ENCODE measurements at regions of chr12 and their contacts with region 1.

Region 1: GRCh38 chr12:99302874-99303273 is 344.7 kb upstream of the GARIN6 start:
- DNase-seq: no peak
- ATAC-seq: no peak
- H3K4me3 ChIP-seq: no peak overlapping the region
- H3K27ac ChIP-seq: no peak overlapping the region
- H3K4me1 ChIP-seq: no peaks in the 10 kb centered on the region
- H3K27me3 ChIP-seq: peaks cover 7% of the 10 kb centered on the region; the same call in 1 of the 2 replicates
- CTCF ChIP-seq: no peak

Region 2: GRCh38 chr12:98955277-98955676 is 347.6 kb before region 1 on chr12:
- CTCF ChIA-PET with region 1: no interaction called
- POLR2A ChIA-PET with region 1: no interaction called
- intact Hi-C with region 1: no loop called
- DNase-seq: peak; percentile 65
- ATAC-seq: peak; percentile 65
- H3K4me3 ChIP-seq: no peak overlapping the region
- H3K27ac ChIP-seq: no peak overlapping the region
- H3K4me1 ChIP-seq: no peaks in the 10 kb centered on the region
- H3K27me3 ChIP-seq: 0 out of 2 replicates have a peak, but pooled peaks cover 7% of the 10 kb centered on the region
- CTCF ChIP-seq: peak; percentile 54

Region 3: DNA sequence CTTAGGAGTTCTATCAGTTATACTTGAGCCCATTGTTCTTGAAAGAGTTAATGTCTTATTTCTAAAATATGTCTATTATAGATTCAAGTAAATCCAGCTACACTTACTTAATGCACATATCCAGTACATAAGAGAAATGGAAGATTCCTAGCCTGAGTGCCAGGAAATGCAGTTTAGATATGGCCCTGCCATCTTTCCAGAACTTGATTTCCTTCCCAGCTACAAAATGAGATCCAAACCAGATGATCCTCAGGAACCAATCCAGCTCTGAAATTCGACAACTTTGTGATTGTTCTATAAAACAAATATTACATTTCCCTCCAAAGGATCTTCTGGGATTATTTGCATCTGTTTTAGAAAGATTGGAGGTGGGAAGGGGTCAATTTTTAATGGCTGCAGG is 27.3 kb after region 1 on chr12:
- CTCF ChIA-PET with region 1: no interaction called
- POLR2A ChIA-PET with region 1: no interaction called
- intact Hi-C with region 1: loop called (anchors 2 kb)
- DNase-seq: no peak
- ATAC-seq: no peak
- H3K4me3 ChIP-seq: no peak overlapping the region
- H3K27ac ChIP-seq: no peak overlapping the region
- H3K4me1 ChIP-seq: no peaks in the 10 kb centered on the region
- H3K27me3 ChIP-seq: peaks cover 6% of the 10 kb centered on the region; the same call in 1 of the 2 replicates
- CTCF ChIP-seq: no peak

Measured in PC-3 (cell line).